Ovary (tissue), 10 donors: ENCODE measurements at regions of chr16 and their contacts with region 1.

Region 1: DNA sequence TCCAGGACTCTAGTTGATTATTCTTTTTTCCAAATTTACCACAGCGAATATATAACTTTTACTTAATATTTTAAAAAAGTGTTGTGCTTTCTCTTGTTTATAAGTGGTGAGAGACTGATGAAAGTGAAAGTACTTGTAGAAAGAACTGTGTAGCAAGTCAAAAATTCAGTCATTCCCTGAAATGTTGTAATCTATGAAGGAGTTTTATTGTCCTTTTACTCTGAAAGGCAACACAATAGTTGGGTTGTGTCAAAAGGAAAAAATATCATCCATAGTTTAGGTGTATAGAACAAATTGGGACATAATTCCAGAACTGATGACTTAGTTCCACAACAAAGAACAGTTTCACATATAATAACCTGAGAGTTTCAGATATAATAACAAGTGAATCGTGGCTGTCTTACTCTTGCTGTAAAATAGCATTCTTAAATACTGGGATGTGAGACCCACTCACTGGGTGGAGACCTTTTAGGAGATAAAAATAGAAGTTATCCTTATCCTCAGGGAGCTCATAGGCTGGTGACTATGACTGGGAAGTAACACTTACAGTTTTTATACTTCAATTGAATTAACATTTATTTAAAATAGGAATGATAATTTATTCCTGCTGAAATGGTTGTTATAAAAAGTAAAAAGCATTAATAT is 20.6 kb downstream of the CYB5B start:
- DNase-seq: no peak
- H3K4me3 ChIP-seq: peak overlapping the region; percentile 27
- H3K27ac ChIP-seq: peak overlapping the region; percentile 85 to 86
- H3K4me1 ChIP-seq: peaks cover 6% of the 10 kb centered on the region
- H3K27me3 ChIP-seq: no peaks in the 10 kb centered on the region
- CTCF ChIP-seq: no peak
- EP300 ChIP-seq: no peak
- POLR2A ChIP-seq: no peak

Region 2: DNA sequence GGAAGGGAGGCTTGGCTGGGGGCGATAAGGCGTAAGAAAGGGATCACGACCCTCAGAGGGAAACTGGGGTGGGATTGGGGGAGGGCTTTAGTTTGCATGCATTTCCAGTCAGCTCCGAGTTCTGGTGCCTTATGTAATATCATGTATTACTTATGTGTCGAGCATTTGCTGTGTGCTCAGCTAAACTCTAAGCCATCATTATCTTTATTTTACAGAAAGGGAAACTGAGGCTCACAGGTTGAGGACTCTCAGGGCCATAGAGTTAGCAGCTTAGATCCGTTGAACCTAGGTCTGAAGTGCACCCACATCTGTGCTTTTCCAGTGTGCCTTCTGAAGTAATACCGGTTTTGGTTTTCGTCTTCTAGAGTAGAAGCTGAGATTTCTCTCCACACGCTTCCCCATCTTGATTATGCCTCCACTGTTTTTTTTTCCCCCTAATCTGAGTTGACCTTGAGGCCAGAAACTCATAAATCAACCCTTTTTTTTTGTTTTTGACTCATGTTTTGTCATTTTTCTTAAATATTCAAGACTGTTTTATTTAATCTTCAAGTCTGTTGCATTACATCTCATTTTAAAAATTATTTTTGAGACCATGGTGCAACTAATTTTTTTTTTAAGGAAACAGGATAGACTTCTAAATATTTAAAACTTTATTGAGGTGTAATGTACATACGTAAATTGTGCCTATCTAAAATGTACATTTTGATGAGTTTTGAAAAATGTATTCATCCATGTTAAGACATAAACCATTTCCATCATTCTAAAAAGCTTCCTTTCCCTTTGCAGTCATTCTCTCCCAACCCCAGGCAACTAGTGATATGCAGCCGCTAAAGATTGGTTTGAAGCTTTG is 19.8 kb before region 1 on chr16:
- intact Hi-C with region 1: loop called in 1 of 4 experiments (anchors 1 kb)
- DNase-seq: no peak
- H3K4me3 ChIP-seq: peak overlapping the region; percentile 89
- H3K27ac ChIP-seq: peak overlapping the region; percentile 63 to 67
- H3K4me1 ChIP-seq: peaks cover 3% of the 10 kb centered on the region
- H3K27me3 ChIP-seq: no peaks in the 10 kb centered on the region
- CTCF ChIP-seq: no peak
- EP300 ChIP-seq: no peak
- POLR2A ChIP-seq: no peak